Right ventricle myocardium inferior (tissue), 1 donor: ENCODE measurements at regions of chr19 and their contacts with region 1.

Region 1: GRCh38 chr19:46025835-46026234 is 3.0 kb upstream of the PGLYRP1 start:
- DNase-seq: no peak
- ATAC-seq: no peak

Region 2: DNA sequence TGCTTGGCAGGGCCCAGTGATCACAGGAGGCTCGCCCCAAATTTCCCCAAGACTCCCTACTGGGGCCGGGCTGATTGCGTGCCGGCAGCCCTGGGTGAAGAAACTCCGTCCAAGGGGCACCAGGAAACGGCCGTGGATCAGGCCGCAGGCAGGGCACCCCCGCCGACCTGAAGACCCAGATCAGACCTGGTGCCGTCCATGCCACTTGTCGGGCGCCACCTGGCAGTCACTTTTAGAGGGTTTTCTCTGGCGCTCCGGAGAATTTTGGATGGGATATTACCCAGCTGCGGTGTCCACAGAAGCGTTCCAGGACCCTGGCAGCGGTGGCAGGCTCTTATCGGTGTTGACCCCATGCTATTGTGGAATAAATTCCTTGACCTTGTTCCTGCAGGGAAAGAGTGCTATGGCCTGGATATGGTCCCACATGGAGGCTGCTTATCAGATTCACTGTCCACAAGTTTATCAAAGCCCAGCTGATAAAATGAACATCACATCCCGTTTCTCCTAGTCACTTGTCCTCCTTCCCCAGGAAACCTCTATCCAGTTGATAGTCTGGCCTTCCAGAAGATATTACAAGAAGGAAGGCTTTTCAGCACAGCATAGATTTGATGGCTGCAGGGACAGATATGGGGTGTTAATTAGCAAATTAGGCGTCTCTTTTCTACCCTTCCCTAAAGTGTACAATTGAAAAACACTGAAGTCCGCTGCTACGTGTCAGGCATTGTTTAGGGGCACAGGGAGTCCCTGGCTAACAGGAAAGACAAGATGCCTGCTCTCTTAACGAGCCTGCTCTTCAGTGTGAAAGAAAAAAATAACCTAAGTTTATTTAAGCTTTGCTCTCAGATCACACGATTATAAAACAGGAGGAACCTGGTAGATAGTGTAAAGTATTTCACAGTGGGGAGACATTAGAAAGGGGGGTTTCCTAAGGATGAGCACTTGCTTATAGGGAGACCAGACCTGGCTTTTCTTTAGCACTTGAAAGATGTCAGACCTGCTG is 160.6 kb after region 1 on chr19:
- intact Hi-C with region 1: loop called (anchors 5 kb)
- DNase-seq: no peak
- ATAC-seq: no peak

Region 3: DNA sequence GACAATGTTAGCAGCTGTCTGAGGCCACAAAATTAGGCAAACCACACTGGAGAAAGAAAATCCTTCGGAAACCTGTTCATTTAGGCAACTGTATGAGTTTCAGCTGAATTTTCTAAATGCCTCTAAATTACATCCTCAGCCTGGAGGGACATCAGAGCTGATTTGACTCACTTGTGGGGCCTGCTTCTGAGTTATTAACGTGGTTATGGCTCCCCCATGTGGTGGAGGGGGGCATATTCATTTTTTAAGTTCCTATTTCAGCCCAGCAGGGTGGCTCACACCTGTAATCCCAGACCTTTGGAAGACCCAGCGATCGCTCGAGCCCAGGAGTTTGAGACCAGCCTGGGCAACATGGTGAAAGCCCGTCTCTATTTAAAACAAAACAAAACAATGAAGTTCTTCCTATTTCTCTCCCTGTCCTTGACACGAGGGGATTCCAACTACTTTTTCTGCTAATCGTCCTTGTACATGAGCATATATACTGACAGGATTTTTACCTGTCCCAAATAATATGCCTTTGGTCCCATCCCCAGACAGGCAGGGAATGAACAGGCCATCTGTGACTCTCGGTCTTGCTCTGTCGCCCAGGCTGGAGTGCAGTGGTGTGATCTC is 239.5 kb after region 1 on chr19:
- intact Hi-C with region 1: loop called (anchors 5 kb)
- DNase-seq: no peak
- ATAC-seq: peak; percentile 80